MCF 10A (cell line): ENCODE measurements at regions of chr17 and their contacts with region 1.

Region 1: DNA sequence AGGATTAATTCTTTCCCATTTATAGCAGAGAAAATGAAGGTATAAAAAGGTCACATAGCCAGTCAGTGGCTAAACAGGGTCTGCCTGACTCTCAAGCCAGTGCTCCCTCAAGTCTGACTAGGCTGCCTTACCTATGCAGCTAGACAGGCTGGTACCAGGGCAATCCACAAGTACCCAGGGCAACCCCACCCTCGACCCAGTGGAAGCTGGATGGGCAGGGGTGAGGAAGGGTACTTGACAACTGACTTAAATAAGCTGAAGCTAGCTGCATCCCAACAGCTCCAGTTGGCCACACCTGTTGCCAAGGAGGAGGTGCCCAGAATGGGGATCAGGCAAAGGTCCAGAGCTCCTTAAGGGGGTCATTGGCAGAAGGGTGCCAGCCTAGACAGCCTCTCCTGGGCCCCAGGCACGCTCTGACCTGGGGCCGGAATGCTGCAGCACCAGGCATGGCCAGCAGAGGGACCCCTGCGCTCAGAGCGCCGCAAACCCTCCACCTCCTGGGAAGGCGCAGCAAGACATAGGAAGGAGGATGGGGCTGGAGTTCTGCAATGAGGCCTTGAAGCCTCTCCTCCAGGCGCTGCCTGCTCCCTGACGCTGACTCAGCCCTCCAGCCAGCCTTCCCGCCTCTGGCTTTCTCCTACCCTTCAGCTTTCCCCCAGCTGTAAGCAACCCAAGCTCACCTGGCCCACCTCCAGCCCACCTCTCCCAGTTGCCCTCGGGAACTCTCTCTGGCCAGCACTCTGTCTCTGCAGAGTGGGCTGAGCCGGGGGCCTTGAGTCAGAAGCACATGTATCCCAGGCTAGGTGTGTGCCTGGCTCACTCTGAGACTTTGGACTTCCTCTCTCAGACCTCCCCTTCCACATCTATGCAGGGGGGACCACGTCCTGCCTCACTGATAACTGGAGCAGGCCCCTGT is 28.8 kb downstream of the MPP2 start:
- DNase-seq: peak; percentile 78
- H3K4me3 Mint-ChIP-seq: no peak overlapping the region
- H3K27ac Mint-ChIP-seq: no peak overlapping the region
- H3K4me1 Mint-ChIP-seq: peaks cover 6% of the 10 kb centered on the region
- H3K27me3 Mint-ChIP-seq: peaks cover 25% of the 10 kb centered on the region
- CTCF ChIP-seq: peak; percentile 86

Region 2: GRCh38 chr17:43846221-43846712 is 32.3 kb before region 1 on chr17:
- CTCF ChIA-PET with region 1: interaction called, 10 read pairs
- POLR2A ChIA-PET with region 1: no interaction called
- intact Hi-C with region 1: no loop called
- DNase-seq: peak; percentile 76
- H3K4me3 Mint-ChIP-seq: no peak overlapping the region
- H3K27ac Mint-ChIP-seq: no peak overlapping the region
- H3K4me1 Mint-ChIP-seq: no peaks in the 10 kb centered on the region
- H3K27me3 Mint-ChIP-seq: peaks cover 5% of the 10 kb centered on the region
- CTCF ChIP-seq: peak; percentile 96

Region 3: GRCh38 chr17:43868226-43868994 is 10.1 kb before region 1 on chr17:
- CTCF ChIA-PET with region 1: interaction called, 20 read pairs
- POLR2A ChIA-PET with region 1: no interaction called
- intact Hi-C with region 1: no loop called
- DNase-seq: no peak
- H3K4me3 Mint-ChIP-seq: no peak overlapping the region
- H3K27ac Mint-ChIP-seq: no peak overlapping the region
- H3K4me1 Mint-ChIP-seq: peaks cover 8% of the 10 kb centered on the region
- H3K27me3 Mint-ChIP-seq: peaks cover 53% of the 10 kb centered on the region
- CTCF ChIP-seq: no peak

Region 4: GRCh38 chr17:43907425-43907981 is 29.0 kb after region 1 on chr17 and contains the start of gene MPP2:
- CTCF ChIA-PET with region 1: interaction called, 39 read pairs
- POLR2A ChIA-PET with region 1: no interaction called
- intact Hi-C with region 1: no loop called
- DNase-seq: peak; percentile 20
- H3K4me3 Mint-ChIP-seq: no peak within 1 kb of the TSS
- H3K27ac Mint-ChIP-seq: no peak within 1 kb of the TSS
- H3K4me1 Mint-ChIP-seq: no peaks in the 10 kb centered on the region
- H3K27me3 Mint-ChIP-seq: peaks cover 27% of the 10 kb centered on the region
- CTCF ChIP-seq: no peak
- total RNA-seq, gene MPP2: not detected in 2 replicates

Region 5: GRCh38 chr17:43946069-43946696 is 67.7 kb after region 1 on chr17:
- CTCF ChIA-PET with region 1: interaction called, 32 read pairs
- POLR2A ChIA-PET with region 1: interaction called, 3 read pairs
- intact Hi-C with region 1: loop called (anchors 1 kb)
- DNase-seq: peak; percentile 11
- H3K4me3 Mint-ChIP-seq: no peak overlapping the region
- H3K27ac Mint-ChIP-seq: no peak overlapping the region
- H3K4me1 Mint-ChIP-seq: no peaks in the 10 kb centered on the region
- H3K27me3 Mint-ChIP-seq: peaks cover 12% of the 10 kb centered on the region
- CTCF ChIP-seq: no peak

Region 6: DNA sequence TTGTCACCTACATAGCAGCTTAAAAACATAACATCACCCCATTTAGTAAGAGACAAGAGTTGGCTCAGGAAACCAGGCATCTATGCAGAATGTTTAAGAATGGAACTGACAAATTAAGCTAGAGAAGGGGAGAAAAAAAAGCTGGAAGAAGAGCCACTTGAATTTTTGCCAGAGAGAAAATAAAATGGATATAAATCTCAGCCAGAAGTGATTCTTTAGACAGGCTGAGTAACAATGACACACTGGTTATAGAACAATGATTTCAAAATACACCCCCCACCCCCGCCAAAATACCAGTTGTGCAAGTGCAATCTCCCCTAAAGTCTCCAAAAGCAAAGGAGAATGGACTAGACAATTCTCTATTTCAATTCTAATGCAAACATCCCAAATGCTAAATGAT is 165.5 kb after region 1 on chr17:
- CTCF ChIA-PET with region 1: interaction called, 7 read pairs
- POLR2A ChIA-PET with region 1: no interaction called
- intact Hi-C with region 1: loop called (anchors 2 kb)
- DNase-seq: peak; percentile 79
- H3K4me3 Mint-ChIP-seq: no peak overlapping the region
- H3K27ac Mint-ChIP-seq: no peak overlapping the region
- H3K4me1 Mint-ChIP-seq: peaks cover 24% of the 10 kb centered on the region
- H3K27me3 Mint-ChIP-seq: no peaks in the 10 kb centered on the region
- CTCF ChIP-seq: no peak